ENCODE measurements at regions of chr19 and their contacts with region 1.

Region 1: DNA sequence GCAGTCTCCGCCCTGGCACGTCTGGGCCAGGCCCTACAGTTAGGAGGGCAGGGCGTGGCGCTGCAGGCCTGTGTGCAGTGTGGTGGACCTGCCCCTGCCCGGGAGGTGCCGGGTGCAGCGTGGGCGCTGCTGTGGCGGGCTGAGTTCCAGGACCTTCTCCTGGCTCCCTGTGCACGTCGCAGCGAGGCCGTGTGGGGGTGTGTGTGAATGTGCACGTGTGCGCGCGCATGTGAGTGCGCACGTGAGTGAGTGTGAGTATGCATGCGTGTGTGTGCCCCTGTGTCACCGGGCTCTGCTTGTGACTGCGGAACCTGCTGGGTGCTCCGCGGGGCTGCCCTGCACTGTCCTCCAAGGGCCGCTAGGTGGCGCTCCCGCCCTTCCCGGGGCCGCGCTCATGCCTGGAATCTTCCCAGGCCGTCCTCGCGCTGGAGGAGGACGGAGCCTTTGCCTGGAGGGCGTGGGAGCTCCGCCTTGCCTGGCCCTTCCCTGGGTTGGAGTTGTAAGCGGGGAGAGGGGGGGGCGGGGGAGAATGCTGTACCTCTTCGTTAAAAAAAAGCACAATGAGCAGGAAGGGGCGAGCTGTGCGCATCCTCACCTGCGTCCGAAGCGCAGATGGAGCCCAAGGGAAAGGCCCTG is 79.3 kb downstream of the KDM4B start:
- DNase-seq: peak; percentile 80
- ATAC-seq: peak; percentile 92
- H3K4me3 Mint-ChIP-seq: no peak overlapping the region
- H3K27ac Mint-ChIP-seq: no peak overlapping the region
- H3K4me1 Mint-ChIP-seq: peaks cover 2% of the 10 kb centered on the region
- H3K27me3 Mint-ChIP-seq: no peaks in the 10 kb centered on the region

Region 2: DNA sequence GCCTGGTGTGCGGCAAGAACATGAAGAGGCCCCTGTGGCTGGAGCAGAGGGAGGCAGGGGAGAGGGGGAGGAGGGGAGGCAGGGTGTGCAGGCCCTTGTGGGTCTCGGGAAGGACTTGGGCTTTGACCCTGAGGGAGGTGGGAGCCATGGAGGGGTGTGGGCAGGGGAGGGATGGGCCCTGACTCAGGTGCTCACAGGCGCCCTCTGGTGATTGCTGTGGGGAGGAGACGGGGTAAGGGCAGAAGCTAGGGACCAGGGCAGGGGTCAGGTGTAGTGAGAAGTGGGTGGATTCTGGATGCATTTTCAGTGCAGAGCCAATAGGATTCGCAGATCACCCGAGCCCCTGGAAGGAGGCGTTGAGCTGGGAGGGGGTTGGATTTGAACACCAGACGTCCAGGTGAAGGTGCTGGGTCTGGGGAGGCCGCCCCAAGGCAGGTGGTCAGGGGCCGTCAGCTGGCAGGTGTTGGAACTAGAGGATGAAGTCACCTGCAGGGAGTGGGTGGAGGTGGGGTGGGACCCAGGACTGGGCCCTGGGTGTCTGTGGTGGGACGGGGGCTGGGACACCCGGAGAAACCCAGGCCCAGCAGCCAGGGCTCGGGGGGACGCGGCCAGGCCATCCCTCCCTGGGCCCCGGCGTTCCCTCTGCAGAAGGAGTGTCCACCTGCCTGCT is 106.1 kb after region 1 on chr19:
- CTCF ChIA-PET with region 1: interaction called, 3 read pairs
- POLR2A ChIA-PET with region 1: no interaction called
- intact Hi-C with region 1: loop called (anchors 1 to 5 kb)
- DNase-seq: peak; percentile 72
- ATAC-seq: peak; percentile 84
- H3K4me3 Mint-ChIP-seq: no peak overlapping the region
- H3K27ac Mint-ChIP-seq: peak overlapping the region; percentile 47
- H3K4me1 Mint-ChIP-seq: no peaks in the 10 kb centered on the region
- H3K27me3 Mint-ChIP-seq: no peaks in the 10 kb centered on the region

Region 3: DNA sequence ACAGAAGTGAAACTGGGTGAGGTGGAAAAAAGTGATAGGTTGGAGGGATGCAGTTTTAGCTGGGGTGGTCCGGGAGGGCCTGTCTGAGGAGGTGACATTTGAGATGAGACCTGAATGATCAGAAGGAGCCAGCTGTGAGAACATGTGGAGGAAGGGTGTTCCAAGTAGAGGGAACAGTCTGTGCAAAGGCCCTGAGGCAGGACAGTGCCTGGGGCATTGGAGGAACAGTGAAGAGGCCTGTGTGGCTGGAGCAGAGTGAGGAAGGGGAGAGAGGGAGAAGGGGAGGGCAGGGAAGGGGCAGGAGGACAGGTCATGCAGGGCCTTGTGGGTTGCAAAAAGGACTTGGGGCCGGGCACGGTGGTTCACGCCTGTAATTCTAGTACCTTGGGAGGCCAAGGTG is 328.7 kb after region 1 on chr19:
- CTCF ChIA-PET with region 1: no interaction called
- POLR2A ChIA-PET with region 1: no interaction called
- intact Hi-C with region 1: loop called in 1 of 2 experiments (anchors 1 kb)
- DNase-seq: no peak
- ATAC-seq: no peak
- H3K4me3 Mint-ChIP-seq: no peak overlapping the region
- H3K27ac Mint-ChIP-seq: no peak overlapping the region
- H3K4me1 Mint-ChIP-seq: no peaks in the 10 kb centered on the region
- H3K27me3 Mint-ChIP-seq: peaks cover 14% of the 10 kb centered on the region

Region 4: DNA sequence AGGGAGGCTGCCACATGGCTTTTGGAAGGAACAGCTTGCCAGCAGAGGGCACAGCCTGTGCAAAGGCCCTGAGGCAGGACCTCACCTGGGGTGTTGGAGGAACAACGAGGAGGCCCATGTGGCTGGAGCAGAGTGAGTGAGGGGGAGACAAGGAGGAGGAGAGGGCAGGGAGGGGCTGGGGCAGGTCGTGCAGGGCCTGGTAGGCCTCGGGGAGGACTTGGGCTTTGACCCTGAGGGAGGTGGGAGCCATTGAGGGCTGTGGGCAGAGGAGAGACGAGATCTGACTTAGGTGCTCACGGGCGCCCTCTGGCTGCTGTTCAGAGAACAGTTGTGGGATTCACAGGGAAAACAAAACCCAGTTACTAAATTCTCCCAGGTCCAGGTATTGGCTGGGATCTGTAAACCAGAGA is 432.2 kb after region 1 on chr19:
- CTCF ChIA-PET with region 1: no interaction called
- POLR2A ChIA-PET with region 1: no interaction called
- intact Hi-C with region 1: loop called in 1 of 2 experiments (anchors 1 kb)
- DNase-seq: peak; percentile 66
- ATAC-seq: no peak
- H3K4me3 Mint-ChIP-seq: no peak overlapping the region
- H3K27ac Mint-ChIP-seq: no peak overlapping the region
- H3K4me1 Mint-ChIP-seq: no peaks in the 10 kb centered on the region
- H3K27me3 Mint-ChIP-seq: peaks cover 42% of the 10 kb centered on the region